ENCODE measurements at regions of chr6 and their contacts with region 1.

Region 1: DNA sequence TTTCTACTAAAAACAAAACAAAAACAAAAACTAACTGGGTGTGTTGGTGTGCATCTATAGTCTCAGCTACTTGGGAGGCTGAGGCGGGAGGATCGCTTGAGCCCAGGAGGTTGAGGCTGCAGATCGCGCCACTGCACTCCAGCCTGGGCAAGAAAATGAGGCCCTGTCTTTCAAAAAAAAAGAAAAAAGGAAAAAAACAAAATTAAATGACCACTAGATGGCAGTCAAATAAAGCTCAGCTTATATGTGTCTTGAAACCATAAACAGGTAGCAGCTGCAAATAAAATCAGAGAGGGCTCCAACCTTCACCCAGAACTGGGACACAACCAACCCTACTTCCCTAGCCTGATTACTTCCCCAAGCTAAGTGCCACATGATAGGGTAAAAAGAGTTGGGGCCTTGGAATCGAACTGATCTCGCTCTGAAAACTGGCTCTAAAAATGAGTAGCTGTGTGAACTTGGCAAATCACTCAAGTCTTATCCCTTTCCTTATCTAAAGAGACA is 67.1 kb upstream of the ADGRF4 start:
- DNase-seq: no peak
- H3K4me3 ChIP-seq: no peak overlapping the region
- H3K27ac ChIP-seq: no peak overlapping the region
- H3K27me3 ChIP-seq: no peaks in the 10 kb centered on the region
- CTCF ChIP-seq: peak; percentile 62

Region 2: DNA sequence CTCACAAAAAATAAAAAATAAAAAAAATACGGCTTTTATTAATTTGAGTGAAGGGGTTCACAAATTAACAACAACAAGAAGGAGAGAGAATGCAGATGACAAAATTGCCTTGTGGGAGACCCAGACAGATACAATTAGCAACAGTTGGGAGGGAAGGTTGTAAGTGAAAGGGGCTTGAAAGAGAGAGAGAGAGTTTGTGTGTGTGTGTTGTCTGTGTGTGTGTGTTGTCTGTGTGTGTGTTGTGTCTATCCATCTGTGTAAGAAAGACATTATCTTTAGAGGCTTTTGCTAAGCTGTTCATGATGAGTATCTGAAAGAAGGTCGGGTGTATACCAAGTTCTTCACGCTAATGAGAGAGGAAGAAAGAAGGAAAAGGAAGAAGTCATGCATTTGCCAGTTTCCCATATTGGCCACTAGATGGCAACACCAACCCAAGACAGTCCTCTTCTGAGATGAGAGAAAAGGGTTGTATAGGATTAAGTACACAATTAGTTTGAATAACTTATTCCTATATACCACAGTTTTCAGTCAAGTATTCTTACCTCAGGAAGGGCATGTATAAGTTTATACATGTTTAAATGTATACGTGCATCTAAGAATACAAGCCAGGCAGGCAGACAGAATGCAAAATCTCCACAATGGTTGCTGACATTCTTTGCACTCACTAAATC is 217.4 kb before region 1 on chr6:
- CTCF ChIA-PET with region 1: interaction called, 30 read pairs
- POLR2A ChIA-PET with region 1: no interaction called
- DNase-seq: peak; percentile 23
- H3K4me3 ChIP-seq: peak overlapping the region; percentile 49
- H3K27ac ChIP-seq: no peak overlapping the region
- H3K27me3 ChIP-seq: no peaks in the 10 kb centered on the region
- CTCF ChIP-seq: peak; percentile 93

Region 3: GRCh38 chr6:47651505-47651944 is 20.2 kb after region 1 on chr6:
- CTCF ChIA-PET with region 1: interaction called, 14 read pairs
- POLR2A ChIA-PET with region 1: no interaction called
- DNase-seq: peak; percentile 16
- H3K4me3 ChIP-seq: no peak overlapping the region
- H3K27ac ChIP-seq: no peak overlapping the region
- H3K27me3 ChIP-seq: peaks cover 3% of the 10 kb centered on the region
- CTCF ChIP-seq: no peak

Region 4: GRCh38 chr6:47733879-47734558 is 102.7 kb after region 1 on chr6:
- CTCF ChIA-PET with region 1: interaction called, 23 read pairs
- POLR2A ChIA-PET with region 1: no interaction called
- DNase-seq: no peak
- H3K4me3 ChIP-seq: no peak overlapping the region
- H3K27ac ChIP-seq: no peak overlapping the region
- H3K27me3 ChIP-seq: no peaks in the 10 kb centered on the region
- CTCF ChIP-seq: peak; percentile 18; the same call in 1 of the 2 replicates

Region 5: GRCh38 chr6:47780510-47781356 is 149.4 kb after region 1 on chr6:
- CTCF ChIA-PET with region 1: interaction called, 77 read pairs
- POLR2A ChIA-PET with region 1: interaction called, 4 read pairs
- DNase-seq: peak; percentile 38
- H3K4me3 ChIP-seq: no peak overlapping the region
- H3K27ac ChIP-seq: no peak overlapping the region
- H3K27me3 ChIP-seq: peaks cover 1% of the 10 kb centered on the region
- CTCF ChIP-seq: peak; percentile 80

Region 6: GRCh38 chr6:49409951-49410542 is 1778.7 kb after region 1 on chr6:
- CTCF ChIA-PET with region 1: interaction called, 11 read pairs
- POLR2A ChIA-PET with region 1: no interaction called
- DNase-seq: peak; percentile 43
- H3K4me3 ChIP-seq: no peak overlapping the region
- H3K27ac ChIP-seq: no peak overlapping the region
- H3K27me3 ChIP-seq: no peaks in the 10 kb centered on the region
- CTCF ChIP-seq: peak; percentile 93

Measured in AG04450 (cell line).